H1 (cell line): ENCODE measurements at regions of chr3 and their contacts with region 1.

Region 1: DNA sequence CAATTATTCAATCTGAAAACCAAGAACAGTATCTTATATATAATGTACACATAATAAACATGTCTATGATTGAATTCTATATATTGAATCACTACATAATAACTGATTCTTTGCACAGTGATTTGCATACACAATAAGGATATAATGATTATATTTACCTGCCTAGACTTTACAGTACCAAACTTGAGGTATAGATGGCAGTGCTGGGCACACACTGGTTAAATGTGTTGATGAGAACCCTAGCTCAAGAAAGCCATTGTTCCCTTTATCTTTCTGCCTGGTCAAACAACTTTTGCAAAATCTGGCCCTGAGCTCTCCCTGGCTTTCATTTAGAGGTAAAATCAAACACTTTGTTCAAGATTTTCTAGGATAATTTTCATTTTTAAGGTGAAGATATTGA is 697.7 kb downstream of the TUSC7 start:
- DNase-seq: no peak
- H3K4me3 ChIP-seq: no peak overlapping the region
- H3K27ac ChIP-seq: no peak overlapping the region
- H3K4me1 ChIP-seq: peaks cover 0 to 13% (median 6%) of the 10 kb centered on the region in 4 experiments; a peak in 4 of 7 replicates
- H3K27me3 ChIP-seq: peaks cover 0 to under 1% (median 0%) of the 10 kb centered on the region in 4 experiments; a peak in 2 of 7 replicates
- CTCF ChIP-seq: peak in 1 of 3 experiments; percentile 61; a peak in 1 of 4 replicates
- EP300 ChIP-seq: no peak
- POLR2A ChIP-seq: no peak
- RAD21 ChIP-seq: peak; percentile 41 to 60

Region 2: DNA sequence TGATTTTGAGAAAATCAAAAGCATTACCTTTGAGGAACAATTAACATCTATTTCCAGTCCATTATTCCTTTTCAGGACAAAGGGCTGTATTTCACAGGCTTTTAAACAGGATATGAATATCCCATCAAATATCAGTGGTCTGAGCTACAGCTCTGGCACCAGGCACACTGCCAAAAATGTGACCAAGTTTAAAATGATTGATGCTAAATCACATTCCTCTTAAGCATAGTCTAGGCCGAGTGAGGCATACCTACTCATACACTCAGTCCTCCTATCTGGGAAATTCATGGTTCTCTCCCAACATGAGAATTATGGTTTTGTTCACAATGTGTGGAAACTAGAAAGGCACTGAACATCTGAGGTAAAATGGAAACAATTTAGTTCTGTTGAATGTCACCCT is 14.2 kb before region 1 on chr3:
- CTCF ChIA-PET with region 1: interaction called, 13 read pairs
- POLR2A ChIA-PET with region 1: no interaction called
- DNase-seq: no peak
- H3K4me3 ChIP-seq: no peak overlapping the region
- H3K27ac ChIP-seq: no peak overlapping the region
- H3K4me1 ChIP-seq: peaks cover 5 to 12% (median 7%) of the 10 kb centered on the region in 4 experiments
- H3K27me3 ChIP-seq: peaks cover 1 to 21% (median 10%) of the 10 kb centered on the region in 4 experiments
- CTCF ChIP-seq: no peak
- EP300 ChIP-seq: no peak
- POLR2A ChIP-seq: no peak
- RAD21 ChIP-seq: no peak

Region 3: GRCh38 chr3:117417411-117417810 is 10.1 kb after region 1 on chr3:
- CTCF ChIA-PET with region 1: interaction called, 13 read pairs
- POLR2A ChIA-PET with region 1: no interaction called
- DNase-seq: no peak
- H3K4me3 ChIP-seq: no peak overlapping the region
- H3K27ac ChIP-seq: no peak overlapping the region
- H3K4me1 ChIP-seq: peaks cover 0 to 4% (median under 1%) of the 10 kb centered on the region in 4 experiments; a peak in 2 of 7 replicates
- H3K27me3 ChIP-seq: no peaks in the 10 kb centered on the region
- CTCF ChIP-seq: no peak
- EP300 ChIP-seq: no peak
- POLR2A ChIP-seq: no peak
- RAD21 ChIP-seq: no peak

Region 4: GRCh38 chr3:117433427-117433826 is 26.1 kb after region 1 on chr3:
- CTCF ChIA-PET with region 1: interaction called, 14 read pairs
- POLR2A ChIA-PET with region 1: interaction called, 3 read pairs
- DNase-seq: no peak
- H3K4me3 ChIP-seq: no peak overlapping the region
- H3K27ac ChIP-seq: no peak overlapping the region
- H3K4me1 ChIP-seq: peaks cover 0 to 4% (median 1%) of the 10 kb centered on the region in 4 experiments; a peak in 1 of 7 replicates
- H3K27me3 ChIP-seq: no peaks in the 10 kb centered on the region
- CTCF ChIP-seq: no peak
- EP300 ChIP-seq: no peak
- POLR2A ChIP-seq: no peak
- RAD21 ChIP-seq: no peak